ENCODE measurements at regions of chrX and their contacts with region 1.

Region 1: GRCh38 chrX:16771483-16772398 is 14.5 kb upstream of the TXLNG start:
- DNase-seq: peak; percentile 81
- ATAC-seq: peak; percentile 88
- H3K4me3 ChIP-seq: no peak overlapping the region
- H3K27ac ChIP-seq: peak overlapping the region; percentile 59; the same call in 1 of the 2 replicates
- H3K4me1 ChIP-seq: peaks cover 3 to 24% of the 10 kb centered on the region in 2 experiments; a peak in 3 of 4 replicates
- H3K27me3 ChIP-seq: no peaks in the 10 kb centered on the region
- CTCF ChIP-seq: no peak
- POLR2A ChIP-seq: peak; percentile 100
- RAD21 ChIP-seq: no peak

Region 2: DNA sequence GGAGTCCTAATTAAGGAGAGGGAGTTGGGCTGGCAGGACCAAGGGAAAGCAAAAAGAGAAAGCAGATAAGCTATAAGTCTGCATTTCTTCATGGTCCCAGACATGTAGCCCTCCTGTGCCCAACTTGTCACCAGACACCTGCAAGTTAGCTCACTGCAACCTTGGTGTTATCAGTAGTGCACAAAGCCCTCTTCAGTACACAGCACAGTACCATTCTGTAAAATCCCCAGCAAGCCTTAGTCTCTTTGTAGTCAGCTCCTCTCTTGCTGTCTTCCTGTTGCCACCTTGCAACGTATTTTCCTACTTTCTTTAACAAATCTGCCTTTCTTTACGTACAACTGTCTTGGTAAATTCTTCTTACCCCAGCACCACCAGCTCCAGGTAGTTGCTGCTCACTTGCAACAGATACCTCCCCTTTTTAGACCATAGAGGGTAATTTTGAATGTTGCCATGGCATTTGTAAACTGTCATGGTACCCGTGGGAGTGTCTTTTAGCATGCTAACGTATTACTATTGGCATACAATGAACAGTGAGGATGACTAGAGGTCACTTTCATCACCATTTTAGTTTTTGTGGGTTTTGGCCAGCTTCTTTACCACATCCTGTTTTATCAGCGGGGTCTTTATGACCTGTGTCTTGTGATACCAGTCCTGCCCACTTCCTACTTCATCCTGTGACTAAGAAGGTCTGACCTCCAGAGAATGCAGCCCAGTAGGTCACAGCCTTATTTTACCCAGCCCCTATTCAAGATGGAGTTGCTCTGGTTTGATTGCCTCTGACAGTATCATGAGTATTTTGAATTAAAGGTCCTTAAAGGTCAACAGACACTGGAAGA is 888.8 kb before region 1 on chrX:
- CTCF ChIA-PET with region 1: no interaction called
- POLR2A ChIA-PET with region 1: no interaction called
- RAD21 ChIA-PET with region 1: no interaction called
- intact Hi-C with region 1: no loop called
- DNase-seq: no peak
- ATAC-seq: no peak
- H3K4me3 ChIP-seq: no peak overlapping the region
- H3K27ac ChIP-seq: no peak overlapping the region
- H3K4me1 ChIP-seq: no peaks in the 10 kb centered on the region; a peak in 1 of 4 replicates
- H3K27me3 ChIP-seq: no peaks in the 10 kb centered on the region
- CTCF ChIP-seq: no peak
- POLR2A ChIP-seq: no peak
- RAD21 ChIP-seq: no peak

Region 3: DNA sequence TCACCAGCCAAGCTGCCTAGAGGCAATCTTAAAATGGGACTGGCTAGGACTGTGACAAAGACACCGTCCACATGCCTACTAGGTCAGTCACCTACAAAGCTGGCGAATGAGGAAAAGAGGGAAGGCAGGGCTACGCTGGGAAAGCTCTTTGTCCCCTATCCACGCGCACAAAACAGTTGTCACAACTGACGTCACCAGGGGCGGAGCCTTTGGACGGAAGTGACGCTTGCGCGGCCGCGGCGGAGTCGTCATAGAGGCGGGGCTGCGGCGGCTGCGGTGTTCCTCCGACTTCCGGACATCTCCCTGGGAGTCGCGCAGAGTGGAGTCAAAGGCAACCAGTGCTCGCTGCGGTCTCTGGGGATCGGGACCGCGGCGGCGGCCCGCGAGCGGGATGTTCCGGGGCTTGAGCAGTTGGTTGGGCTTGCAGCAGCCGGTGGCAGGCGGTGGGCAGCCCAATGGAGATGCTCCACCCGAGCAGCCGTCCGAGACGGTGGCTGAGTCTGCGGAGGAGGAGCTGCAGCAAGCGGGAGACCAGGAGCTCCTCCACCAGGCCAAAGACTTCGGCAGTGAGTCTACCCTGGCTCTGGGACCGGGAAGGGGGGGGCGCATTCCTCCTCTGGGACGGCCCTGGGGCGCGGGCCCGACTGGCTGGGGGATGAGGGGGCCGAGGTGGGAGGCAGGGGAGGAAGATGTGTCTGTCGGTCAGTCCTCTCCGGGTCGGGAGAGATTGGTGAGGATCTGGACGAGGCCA is 52.2 kb before region 1 on chrX and contains the start of gene SYAP1:
- CTCF ChIA-PET with region 1: no interaction called
- POLR2A ChIA-PET with region 1: interaction called, 19 read pairs
- RAD21 ChIA-PET with region 1: no interaction called
- intact Hi-C with region 1: no loop called
- DNase-seq: peak; percentile 93
- ATAC-seq: peak; percentile 96
- H3K4me3 ChIP-seq: peak within 1 kb of the TSS; percentile 75 to 82
- H3K27ac ChIP-seq: peak within 1 kb of the TSS; percentile 77
- H3K4me1 ChIP-seq: peaks cover 4 to 14% of the 10 kb centered on the region in 2 experiments; a peak in 1 of 4 replicates
- H3K27me3 ChIP-seq: no peaks in the 10 kb centered on the region
- CTCF ChIP-seq: no peak
- POLR2A ChIP-seq: peak; percentile 86
- RAD21 ChIP-seq: no peak
- total RNA-seq, gene SYAP1: 24.8 TPM

Region 4: GRCh38 chrX:16786139-16786790 is 14.5 kb after region 1 on chrX and contains the start of gene TXLNG:
- CTCF ChIA-PET with region 1: no interaction called
- POLR2A ChIA-PET with region 1: interaction called, 41 read pairs
- RAD21 ChIA-PET with region 1: interaction called in 1 of 2 experiments, 3 read pairs
- intact Hi-C with region 1: no loop called
- DNase-seq: peak; percentile 96
- ATAC-seq: peak; percentile 97
- H3K4me3 ChIP-seq: peak within 1 kb of the TSS; percentile 63 to 67
- H3K27ac ChIP-seq: peak within 1 kb of the TSS; percentile 67
- H3K4me1 ChIP-seq: peaks cover 8 to 14% of the 10 kb centered on the region in 2 experiments; a peak in 3 of 4 replicates
- H3K27me3 ChIP-seq: no peaks in the 10 kb centered on the region
- CTCF ChIP-seq: no peak
- POLR2A ChIP-seq: peak; percentile 51
- RAD21 ChIP-seq: no peak
- total RNA-seq, gene TXLNG: 22.9 TPM

Region 5: GRCh38 chrX:16914058-16914457 is 142.3 kb after region 1 on chrX:
- CTCF ChIA-PET with region 1: no interaction called
- POLR2A ChIA-PET with region 1: no interaction called
- RAD21 ChIA-PET with region 1: no interaction called
- intact Hi-C with region 1: no loop called
- DNase-seq: no peak
- ATAC-seq: no peak
- H3K4me3 ChIP-seq: no peak overlapping the region
- H3K27ac ChIP-seq: no peak overlapping the region
- H3K4me1 ChIP-seq: no peaks in the 10 kb centered on the region
- H3K27me3 ChIP-seq: no peaks in the 10 kb centered on the region
- CTCF ChIP-seq: no peak
- POLR2A ChIP-seq: no peak
- RAD21 ChIP-seq: no peak

Measured in HCT116 (cell line).